Activated naive CD4-positive, alpha-beta T cell treated with anti-CD3 and anti-CD28 coated beads for 36 hours (primary cell): ENCODE measurements at regions of chr12 and their contacts with region 1.

Region 1: GRCh38 chr12:89494411-89495231 is 30.0 kb downstream of the GALNT4 start:
- DNase-seq: peak; percentile 73
- H3K4me3 Mint-ChIP-seq: peak overlapping the region; percentile 5
- H3K27ac Mint-ChIP-seq: peak overlapping the region; percentile 77
- H3K4me1 Mint-ChIP-seq: peaks cover 17% of the 10 kb centered on the region
- H3K27me3 Mint-ChIP-seq: no peaks in the 10 kb centered on the region

Region 2: DNA sequence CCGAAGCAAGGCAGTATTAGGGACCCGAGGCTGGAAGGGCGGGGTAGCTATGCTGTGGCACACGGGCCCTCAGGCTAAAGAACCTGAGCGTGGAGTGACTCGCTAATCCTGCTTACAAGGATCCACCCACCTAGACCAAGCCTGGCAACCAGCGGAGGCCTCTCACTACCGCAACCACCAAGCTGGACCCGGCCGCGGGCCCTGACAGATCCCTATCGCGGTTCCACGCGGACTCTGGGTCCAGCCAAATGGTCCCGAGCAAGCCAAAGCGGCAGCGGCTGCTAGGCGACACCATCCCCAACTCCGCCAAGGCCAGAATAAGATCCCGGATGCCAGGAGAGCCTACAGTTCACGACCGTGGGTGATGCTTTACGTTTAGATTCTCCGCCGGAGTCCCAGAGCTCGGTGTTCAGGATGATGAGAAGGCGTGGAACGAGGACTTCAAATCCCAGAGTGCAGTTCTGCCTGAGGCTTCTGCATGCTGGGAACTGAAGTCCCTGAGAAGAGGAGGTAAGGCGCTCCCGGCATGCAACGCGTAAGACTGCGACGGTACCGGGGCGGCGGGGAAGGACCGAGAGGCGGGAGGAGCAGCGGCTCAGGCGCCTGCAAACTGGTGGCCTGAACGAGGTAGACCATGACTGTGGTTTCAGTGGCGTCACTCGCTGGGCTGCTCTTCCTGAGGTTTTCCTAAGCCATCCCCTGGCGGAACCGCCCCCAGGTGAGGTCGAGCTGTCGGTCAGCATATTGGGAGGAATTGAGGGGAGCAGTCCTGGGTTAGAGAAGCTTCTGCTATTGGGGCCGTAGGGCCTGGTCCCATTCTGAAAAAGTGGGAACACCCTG is 1352.6 kb before region 1 on chr12 and contains the starts of genes CEP290 and TMTC3:
- CTCF ChIA-PET with region 1: no interaction called
- intact Hi-C with region 1: loop called (anchors 1 kb)
- DNase-seq: peak; percentile 95
- H3K4me3 Mint-ChIP-seq: peak within 1 kb of the TSS; percentile 91
- H3K27ac Mint-ChIP-seq: peak within 1 kb of the TSS; percentile 90
- H3K4me1 Mint-ChIP-seq: peaks cover 40% of the 10 kb centered on the region
- H3K27me3 Mint-ChIP-seq: no peaks in the 10 kb centered on the region
- total RNA-seq, gene CEP290: 12.7 to 13.6 TPM
- total RNA-seq, gene TMTC3: 5.2 TPM

Region 3: GRCh38 chr12:88820012-88820411 is 674.6 kb before region 1 on chr12:
- CTCF ChIA-PET with region 1: no interaction called
- intact Hi-C with region 1: no loop called
- DNase-seq: no peak
- H3K4me3 Mint-ChIP-seq: no peak overlapping the region
- H3K27ac Mint-ChIP-seq: no peak overlapping the region
- H3K4me1 Mint-ChIP-seq: no peaks in the 10 kb centered on the region
- H3K27me3 Mint-ChIP-seq: no peaks in the 10 kb centered on the region

Region 4: DNA sequence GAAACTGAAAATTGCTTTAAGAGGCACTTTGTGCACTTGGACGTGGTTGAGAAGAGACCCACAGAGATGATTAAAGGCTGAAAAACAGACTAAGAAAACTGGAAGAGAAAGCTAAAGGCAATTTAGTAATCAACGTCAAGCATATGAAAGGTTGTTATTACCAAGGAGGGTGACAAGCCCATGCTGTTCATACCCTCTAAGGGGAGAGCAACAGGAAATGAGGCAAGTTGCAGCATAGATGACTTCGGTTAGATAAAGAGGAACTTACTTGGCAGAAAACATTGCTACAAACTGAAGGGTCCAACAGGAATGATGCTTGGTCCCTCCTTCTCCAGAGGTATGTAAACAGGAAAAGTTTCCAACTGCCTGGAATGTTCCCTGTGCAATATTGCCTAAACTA is 250.1 kb before region 1 on chr12:
- CTCF ChIA-PET with region 1: no interaction called
- intact Hi-C with region 1: loop called (anchors 1 kb)
- DNase-seq: peak; percentile 57
- H3K4me3 Mint-ChIP-seq: peak overlapping the region; percentile 36
- H3K27ac Mint-ChIP-seq: peak overlapping the region; percentile 73
- H3K4me1 Mint-ChIP-seq: peaks cover 33% of the 10 kb centered on the region
- H3K27me3 Mint-ChIP-seq: no peaks in the 10 kb centered on the region

Region 5: GRCh38 chr12:89524541-89525285 is 30.1 kb after region 1 on chr12 and contains the start of gene GALNT4:
- CTCF ChIA-PET with region 1: interaction called, 6 read pairs
- intact Hi-C with region 1: loop called (anchors 1 kb)
- DNase-seq: peak; percentile 80
- H3K4me3 Mint-ChIP-seq: peak within 1 kb of the TSS; percentile 94
- H3K27ac Mint-ChIP-seq: peak within 1 kb of the TSS; percentile 93
- H3K4me1 Mint-ChIP-seq: peaks cover 41% of the 10 kb centered on the region
- H3K27me3 Mint-ChIP-seq: no peaks in the 10 kb centered on the region
- total RNA-seq, gene GALNT4: 2.9 to 3.4 TPM

Region 6: DNA sequence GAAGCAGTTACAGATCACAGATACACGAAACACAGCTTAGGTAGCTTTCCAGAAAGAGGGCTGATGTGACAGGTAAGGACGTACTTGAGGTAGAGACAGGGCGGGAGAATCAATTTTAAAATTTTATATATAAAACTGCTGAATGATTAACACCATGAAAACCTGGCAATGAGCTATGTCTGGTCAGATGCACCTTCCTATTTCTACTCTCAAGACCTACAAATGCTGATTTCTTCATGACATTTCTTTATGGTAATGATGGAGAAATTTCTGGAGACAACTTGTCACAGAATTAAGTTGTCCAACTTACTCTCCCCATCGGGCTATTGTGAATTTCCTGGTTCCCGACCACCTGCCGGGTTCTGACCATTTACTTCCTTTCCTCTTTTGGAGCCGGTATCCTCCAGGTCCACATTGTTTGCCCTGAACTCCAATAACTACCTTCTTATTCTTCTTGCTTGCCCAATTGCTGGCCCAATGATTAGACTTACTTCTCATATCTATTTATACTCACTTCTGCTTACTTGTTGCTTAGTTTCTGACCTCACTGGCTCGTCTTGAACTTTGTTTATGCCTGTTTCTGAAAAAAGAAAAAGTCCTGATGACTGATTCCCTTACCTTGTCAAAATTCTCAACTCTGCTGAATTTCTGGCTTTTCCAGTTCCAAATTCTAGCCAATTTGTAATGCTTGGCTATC is 226.8 kb after region 1 on chr12:
- CTCF ChIA-PET with region 1: no interaction called
- intact Hi-C with region 1: no loop called
- DNase-seq: no peak
- H3K4me3 Mint-ChIP-seq: no peak overlapping the region
- H3K27ac Mint-ChIP-seq: no peak overlapping the region
- H3K4me1 Mint-ChIP-seq: no peaks in the 10 kb centered on the region
- H3K27me3 Mint-ChIP-seq: no peaks in the 10 kb centered on the region

Region 7: DNA sequence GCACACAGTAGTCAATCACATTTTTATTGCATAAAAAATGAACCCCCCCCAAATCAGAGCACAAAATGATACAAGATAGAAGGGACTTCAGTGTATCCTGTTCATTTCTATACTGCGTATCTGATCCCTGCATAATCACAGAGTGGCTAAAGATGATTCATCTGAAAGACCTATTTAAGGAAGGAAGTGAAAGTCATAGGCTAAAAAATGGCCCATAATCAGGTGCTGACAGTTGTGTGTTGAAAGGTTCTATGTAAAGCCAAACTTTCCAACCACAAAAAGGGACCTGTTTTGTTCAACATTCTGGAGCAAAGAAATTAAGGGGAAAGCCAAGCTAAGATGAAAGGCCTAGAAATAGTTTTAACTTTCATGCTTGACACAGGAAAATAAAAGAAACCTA is 361.8 kb after region 1 on chr12:
- CTCF ChIA-PET with region 1: no interaction called
- intact Hi-C with region 1: loop called (anchors 1 kb)
- DNase-seq: no peak
- H3K4me3 Mint-ChIP-seq: no peak overlapping the region
- H3K27ac Mint-ChIP-seq: no peak overlapping the region
- H3K4me1 Mint-ChIP-seq: peaks cover 42% of the 10 kb centered on the region
- H3K27me3 Mint-ChIP-seq: no peaks in the 10 kb centered on the region